Activated T-helper 2 cell treated with anti-CD3 and anti-CD28 coated beads, Interferon-gamma antibody, Interleukin-2, Interleukin-4, amounts not matched to agents 10 μg/mL and 5 μg/mL and 100 μg/mL, durations not matched to agents 14 hours and 24 hours and 36 hours (primary cell): ENCODE measurements at regions of chr7 and their contacts with region 1.

Region 1: GRCh38 chr7:29194594-29195427 is at the start of gene CHN2:
- DNase-seq: peak; percentile 41
- H3K4me3 Mint-ChIP-seq: peak within 1 kb of the TSS; percentile 81
- H3K27ac Mint-ChIP-seq: no peak within 1 kb of the TSS
- H3K4me1 Mint-ChIP-seq: peaks cover 20% of the 10 kb centered on the region
- H3K27me3 Mint-ChIP-seq: peaks cover 65% of the 10 kb centered on the region
- total RNA-seq, gene CHN2: 0.73 and 0.94 TPM in 2 replicates

Region 2: DNA sequence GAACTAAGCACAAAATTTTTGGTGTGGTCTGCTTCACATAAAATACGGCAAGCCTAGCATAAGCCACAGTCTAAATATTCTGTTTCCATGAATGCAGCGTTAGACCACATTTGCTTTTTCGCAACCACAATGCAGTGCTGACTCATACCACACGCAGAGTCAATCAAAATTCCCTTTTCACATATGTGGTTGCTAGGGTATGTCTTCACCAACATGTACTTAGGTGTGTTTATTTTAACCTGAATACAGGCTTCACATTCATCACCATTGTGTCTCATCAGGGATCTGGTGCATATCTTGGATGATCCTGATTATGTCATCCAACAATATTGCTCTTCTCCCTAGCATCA is 90.6 kb after region 1 on chr7:
- intact Hi-C with region 1: loop called (anchors 5 kb)
- DNase-seq: peak; percentile 54
- H3K4me3 Mint-ChIP-seq: no peak overlapping the region
- H3K27ac Mint-ChIP-seq: no peak overlapping the region
- H3K4me1 Mint-ChIP-seq: peaks cover 47% of the 10 kb centered on the region
- H3K27me3 Mint-ChIP-seq: peaks cover 33% of the 10 kb centered on the region